Activated naive CD4-positive, alpha-beta T cell treated with anti-CD3 and anti-CD28 coated beads for 36 hours (primary cell): ENCODE measurements at regions of chr19 and their contacts with region 1.

Region 1: GRCh38 chr19:57410877-57411671 is at the start of gene ZNF17:
- DNase-seq: peak; percentile 96
- H3K4me3 Mint-ChIP-seq: peak within 1 kb of the TSS; percentile 92
- H3K27ac Mint-ChIP-seq: peak within 1 kb of the TSS; percentile 56
- H3K4me1 Mint-ChIP-seq: peaks cover 19% of the 10 kb centered on the region
- H3K27me3 Mint-ChIP-seq: no peaks in the 10 kb centered on the region
- total RNA-seq, gene ZNF17: 4.6 to 6.3 TPM

Region 2: GRCh38 chr19:57350877-57351805 is 59.9 kb before region 1 on chr19 and contains the start of gene ZNF304:
- CTCF ChIA-PET with region 1: no interaction called
- intact Hi-C with region 1: no loop called
- DNase-seq: peak; percentile 89
- H3K4me3 Mint-ChIP-seq: peak within 1 kb of the TSS; percentile 88
- H3K27ac Mint-ChIP-seq: peak within 1 kb of the TSS; percentile 72
- H3K4me1 Mint-ChIP-seq: peaks cover 25% of the 10 kb centered on the region
- H3K27me3 Mint-ChIP-seq: no peaks in the 10 kb centered on the region
- total RNA-seq, gene ZNF304: 3.3 to 3.6 TPM

Region 3: DNA sequence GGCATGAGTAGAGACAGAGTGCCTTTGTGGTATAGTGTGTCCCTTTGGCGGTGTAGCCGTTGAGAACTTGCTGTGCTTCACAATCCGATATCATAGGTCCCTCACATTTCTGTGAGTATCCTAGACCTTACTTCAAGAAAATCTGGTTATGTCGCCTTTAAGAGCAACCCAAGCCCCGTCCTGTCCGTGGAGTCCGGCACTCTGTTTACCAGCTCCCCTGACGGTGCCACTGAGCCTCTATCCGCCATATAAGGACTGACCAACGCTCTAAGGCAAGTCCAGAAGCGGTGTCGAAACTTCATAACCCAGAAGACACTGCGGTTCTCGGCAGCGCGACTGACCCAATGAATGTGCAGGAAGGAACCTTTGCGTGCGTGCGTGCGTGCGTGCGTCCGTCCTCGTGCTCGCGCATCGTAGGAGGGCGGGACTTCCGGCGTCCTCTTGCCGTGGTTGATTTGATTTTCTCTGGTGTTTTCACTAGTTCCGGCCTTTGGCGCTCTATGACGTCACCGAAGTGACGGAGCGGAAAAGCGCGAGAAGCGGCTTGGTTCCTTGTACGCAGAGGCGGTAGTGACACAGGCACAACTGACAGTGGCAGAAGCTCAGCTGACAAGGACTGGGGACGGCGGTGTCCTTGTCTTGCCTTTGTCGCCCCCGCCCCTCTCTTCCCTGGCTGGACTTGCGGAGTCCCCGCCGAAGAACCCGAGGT is 47.9 kb before region 1 on chr19 and contains the starts of genes TRAPPC2B and ZNF547:
- CTCF ChIA-PET with region 1: no interaction called
- intact Hi-C with region 1: loop called (anchors 1 kb)
- DNase-seq: peak; percentile 97
- H3K4me3 Mint-ChIP-seq: peak within 1 kb of the TSS; percentile 85
- H3K27ac Mint-ChIP-seq: peak within 1 kb of the TSS; percentile 89
- H3K4me1 Mint-ChIP-seq: peaks cover 11% of the 10 kb centered on the region
- H3K27me3 Mint-ChIP-seq: no peaks in the 10 kb centered on the region
- total RNA-seq, gene TRAPPC2B: 3.1 to 3.4 TPM
- total RNA-seq, gene ZNF547: 0.84 to 1.3 TPM

Region 4: GRCh38 chr19:57435062-57435978 is 24.2 kb after region 1 on chr19 and contains the start of gene ZNF749:
- CTCF ChIA-PET with region 1: no interaction called
- intact Hi-C with region 1: loop called (anchors 1 kb)
- DNase-seq: peak; percentile 98
- H3K4me3 Mint-ChIP-seq: peak within 1 kb of the TSS; percentile 93
- H3K27ac Mint-ChIP-seq: peak within 1 kb of the TSS; percentile 70
- H3K4me1 Mint-ChIP-seq: peaks cover 26% of the 10 kb centered on the region
- H3K27me3 Mint-ChIP-seq: no peaks in the 10 kb centered on the region
- total RNA-seq, gene ZNF749: 8.2 to 9.9 TPM

Region 5: GRCh38 chr19:57559404-57560025 is 148.4 kb after region 1 on chr19 and contains the start of gene ZNF550:
- CTCF ChIA-PET with region 1: no interaction called
- intact Hi-C with region 1: loop called (anchors 1 kb)
- DNase-seq: peak; percentile 86
- H3K4me3 Mint-ChIP-seq: peak within 1 kb of the TSS; percentile 96
- H3K27ac Mint-ChIP-seq: peak within 1 kb of the TSS; percentile 84
- H3K4me1 Mint-ChIP-seq: peaks cover 25% of the 10 kb centered on the region
- H3K27me3 Mint-ChIP-seq: no peaks in the 10 kb centered on the region
- total RNA-seq, gene ZNF550: 6.6 to 9.3 TPM

Region 6: DNA sequence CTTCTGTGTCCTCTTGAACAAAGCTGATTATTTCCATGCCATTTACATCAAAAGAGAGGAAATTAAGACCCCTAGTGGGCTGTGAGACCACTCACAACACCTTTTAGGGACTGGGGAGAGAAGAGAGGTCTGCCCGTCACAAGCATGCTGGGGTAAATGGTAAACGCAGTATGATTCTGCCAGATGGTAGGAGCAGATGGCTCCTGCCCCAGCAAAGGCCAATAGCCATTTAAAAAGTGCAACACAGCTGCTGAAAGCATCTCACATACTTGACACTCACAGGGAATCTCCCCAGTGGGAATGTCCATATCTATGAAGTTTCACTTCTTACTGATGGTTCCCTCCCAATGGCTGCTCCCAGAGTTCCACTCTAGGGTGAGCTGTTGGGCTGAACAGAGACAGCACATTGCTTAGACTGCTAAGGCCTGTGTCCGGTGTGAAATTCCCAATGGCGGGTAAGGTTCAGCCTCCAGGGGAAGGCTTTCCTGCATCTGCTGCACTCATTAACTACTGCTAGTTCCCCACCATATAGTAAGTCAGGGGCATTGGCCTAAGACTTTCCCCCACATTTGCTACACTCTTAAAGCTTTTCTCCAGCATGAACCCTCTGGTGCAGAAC is 308.9 kb after region 1 on chr19:
- CTCF ChIA-PET with region 1: no interaction called
- intact Hi-C with region 1: loop called (anchors 5 kb)
- DNase-seq: no peak
- H3K4me3 Mint-ChIP-seq: no peak overlapping the region
- H3K27ac Mint-ChIP-seq: no peak overlapping the region
- H3K4me1 Mint-ChIP-seq: peaks cover 2% of the 10 kb centered on the region
- H3K27me3 Mint-ChIP-seq: no peaks in the 10 kb centered on the region